Common myeloid progenitor, CD34-positive (primary cell): ENCODE measurements at regions of chrX and their contacts with region 1.

Region 1: DNA sequence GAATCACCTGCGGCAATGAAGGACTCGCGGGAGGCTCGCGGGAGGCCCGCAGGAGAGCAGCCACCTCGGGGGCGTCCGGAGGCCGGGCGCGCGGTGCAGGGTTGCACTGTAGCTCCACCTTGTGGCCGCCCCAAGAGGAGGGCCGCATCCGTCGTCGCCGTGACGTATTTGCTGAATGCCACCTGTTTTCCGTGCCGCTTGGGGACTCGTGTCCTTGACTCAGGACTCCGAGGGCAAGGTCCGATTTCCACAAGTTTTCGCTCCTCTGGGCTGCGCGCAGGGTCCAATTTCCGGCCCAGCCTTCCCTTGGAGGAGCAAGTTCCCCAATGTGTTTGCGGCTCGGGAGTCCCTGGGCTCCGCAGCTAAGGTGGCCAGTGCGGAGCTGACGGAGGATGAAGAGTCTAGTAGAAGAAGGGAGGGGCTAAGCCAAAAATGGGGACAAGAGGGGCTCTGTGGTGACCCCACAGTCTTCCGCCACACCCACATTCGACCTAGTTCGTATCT is 10.7 kb upstream of the DLG3 start:
- DNase-seq: peak in 2 of 3 donors; percentile 72 to 77
- H3K4me3 ChIP-seq: peak overlapping the region; percentile 47 to 77 (median 61)
- H3K27ac ChIP-seq: no peak overlapping the region
- H3K4me1 ChIP-seq: peaks cover 0 to 22% (median 16%) of the 10 kb centered on the region in 4 experiments
- H3K27me3 ChIP-seq: peaks cover 0 to 13% (median 0%) of the 10 kb centered on the region in 5 experiments

Region 2: GRCh38 chrX:69844636-69845035 is 589.3 kb before region 1 on chrX:
- CTCF ChIA-PET with region 1: no interaction called
- POLR2A ChIA-PET with region 1: no interaction called
- DNase-seq: no peak
- H3K4me3 ChIP-seq: no peak overlapping the region
- H3K27ac ChIP-seq: no peak overlapping the region
- H3K4me1 ChIP-seq: no peaks in the 10 kb centered on the region
- H3K27me3 ChIP-seq: peaks cover 0 to 3% (median 0%) of the 10 kb centered on the region in 5 experiments

Region 3: GRCh38 chrX:70405003-70405402 is 28.9 kb before region 1 on chrX:
- CTCF ChIA-PET with region 1: no interaction called
- POLR2A ChIA-PET with region 1: no interaction called
- DNase-seq: no peak
- H3K4me3 ChIP-seq: no peak overlapping the region
- H3K27ac ChIP-seq: no peak overlapping the region
- H3K4me1 ChIP-seq: no peaks in the 10 kb centered on the region
- H3K27me3 ChIP-seq: no peaks in the 10 kb centered on the region

Region 4: GRCh38 chrX:70422851-70423341 is 11.0 kb before region 1 on chrX and contains the start of gene GDPD2:
- CTCF ChIA-PET with region 1: interaction called, 16 read pairs
- POLR2A ChIA-PET with region 1: interaction called, 3 read pairs
- DNase-seq: peak in 2 of 3 donors; percentile 50 to 57
- H3K4me3 ChIP-seq: no peak within 1 kb of the TSS
- H3K27ac ChIP-seq: no peak within 1 kb of the TSS
- H3K4me1 ChIP-seq: peaks cover 0 to 2% (median 0%) of the 10 kb centered on the region in 4 experiments
- H3K27me3 ChIP-seq: peaks cover 0 to 13% (median 0%) of the 10 kb centered on the region in 5 experiments

Region 5: DNA sequence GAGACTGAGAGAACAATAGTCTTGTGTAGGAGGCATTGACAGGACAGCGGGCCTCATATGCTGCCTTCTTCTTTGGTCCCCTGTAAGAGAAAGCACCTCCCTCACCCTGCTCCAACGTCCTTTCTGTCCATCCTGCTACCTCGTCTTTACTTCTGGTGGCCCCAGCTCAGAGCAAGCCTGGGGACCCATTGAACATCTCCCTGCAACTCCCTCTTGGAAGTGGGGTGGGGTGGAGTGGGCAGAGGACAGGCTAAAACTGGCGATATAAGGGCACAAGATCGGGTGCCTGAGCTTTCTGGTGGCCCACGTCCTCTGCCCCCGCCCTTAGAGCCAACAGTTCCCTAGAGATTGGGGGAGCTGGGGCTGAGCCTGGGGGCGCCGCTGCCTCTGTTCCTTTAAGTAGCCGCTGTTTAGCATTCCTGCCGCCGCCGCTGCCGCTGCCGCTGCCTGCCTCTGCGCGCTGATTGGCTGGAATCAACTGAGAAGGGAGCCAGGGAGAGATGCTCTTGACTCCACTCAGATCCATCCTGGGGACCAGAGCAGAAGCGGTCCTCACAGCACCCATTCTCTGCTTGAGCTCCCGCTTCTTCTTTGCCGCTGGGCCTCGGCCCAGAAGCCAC is 10.5 kb after region 1 on chrX and contains the start of gene DLG3:
- CTCF ChIA-PET with region 1: interaction called, 12 read pairs
- POLR2A ChIA-PET with region 1: no interaction called
- DNase-seq: no peak
- H3K4me3 ChIP-seq: peak within 1 kb of the TSS in 3 of 7 experiments; percentile 24 to 45 (median 36)
- H3K27ac ChIP-seq: no peak within 1 kb of the TSS
- H3K4me1 ChIP-seq: peaks cover 0 to 6% (median 1%) of the 10 kb centered on the region in 4 experiments
- H3K27me3 ChIP-seq: peaks cover 1 to 58% (median 11%) of the 10 kb centered on the region in 5 experiments

Region 6: DNA sequence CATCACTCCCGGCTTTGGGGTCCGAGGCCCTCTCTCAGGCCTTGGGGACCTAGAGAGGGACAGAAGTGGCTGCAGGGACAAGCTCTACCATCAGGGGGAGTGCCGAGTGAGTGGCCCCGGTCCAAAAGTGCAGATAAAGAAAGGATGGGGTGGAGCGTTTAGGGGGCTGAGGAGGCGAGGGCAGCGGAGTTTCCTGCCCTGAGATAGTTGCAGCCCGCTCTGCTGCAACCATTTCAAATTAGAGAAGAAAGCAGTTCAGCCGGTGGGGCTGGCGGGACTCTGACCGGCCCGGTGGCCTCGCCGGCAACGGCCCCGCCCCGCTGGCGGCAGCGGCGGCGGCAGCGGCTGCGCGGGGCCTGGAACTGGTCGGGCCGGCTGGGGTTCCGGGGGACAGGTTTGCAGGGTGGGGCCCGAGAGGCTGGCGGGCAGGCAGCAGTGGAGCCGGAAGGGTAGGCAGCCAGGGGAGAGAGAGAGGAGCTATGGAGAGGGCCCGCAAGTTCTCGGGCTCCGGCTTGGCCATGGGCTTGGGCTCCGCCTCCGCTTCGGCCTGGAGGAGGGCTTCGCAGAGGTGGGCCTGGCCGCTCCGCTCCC is 18.3 kb after region 1 on chrX:
- CTCF ChIA-PET with region 1: interaction called, 12 read pairs
- POLR2A ChIA-PET with region 1: no interaction called
- DNase-seq: peak in 2 of 3 donors; percentile 61 to 65
- H3K4me3 ChIP-seq: peak overlapping the region; percentile 40 to 78 (median 57)
- H3K27ac ChIP-seq: no peak overlapping the region
- H3K4me1 ChIP-seq: peaks cover 7 to 26% (median 15%) of the 10 kb centered on the region in 4 experiments
- H3K27me3 ChIP-seq: peaks cover 0 to 7% (median 0%) of the 10 kb centered on the region in 5 experiments